ENCODE measurements at regions of chr1 and their contacts with region 1.

Region 1: GRCh38 chr1:67674260-67675011 is 10.6 kb upstream of the GADD45A start:
- DNase-seq: peak; percentile 84 to 98 (median 94)
- H3K4me3 ChIP-seq: peak overlapping the region in 1 of 7 experiments; percentile 37
- H3K27ac ChIP-seq: peak overlapping the region in 1 of 2 experiments; percentile 52
- H3K4me1 ChIP-seq: peaks cover 17 to 27% (median 22%) of the 10 kb centered on the region in 4 experiments
- H3K27me3 ChIP-seq: no peaks in the 10 kb centered on the region

Region 2: GRCh38 chr1:67685067-67685557 is 10.7 kb after region 1 on chr1 and contains the start of gene GADD45A:
- CTCF ChIA-PET with region 1: interaction called, 20 read pairs
- POLR2A ChIA-PET with region 1: interaction called, 30 read pairs
- DNase-seq: peak; percentile 98 to 99 (median 99)
- H3K4me3 ChIP-seq: peak within 1 kb of the TSS; percentile 84 to 95 (median 93)
- H3K27ac ChIP-seq: peak within 1 kb of the TSS; percentile 62 to 88
- H3K4me1 ChIP-seq: peaks cover 32 to 51% (median 41%) of the 10 kb centered on the region in 4 experiments
- H3K27me3 ChIP-seq: no peaks in the 10 kb centered on the region

Measured in common myeloid progenitor, CD34-positive (primary cell).